Activated T-helper 1 cell treated with anti-CD3 and anti-CD28 coated beads, Interleukin-12 subunit alpha, Interleukin-12 subunit beta, Interleukin-2, Interleukin-4 antibody, amounts not matched to agents 30 ng/mL and 10 ng/mL and 1 ng/mL, durations not matched to agents 14 hours and 24 hours and 36 hours (primary cell): ENCODE measurements at regions of chr10 and their contacts with region 1.

Region 1: GRCh38 chr10:95907456-95908253 is at the start of gene CC2D2B:
- DNase-seq: peak; percentile 59
- H3K4me3 Mint-ChIP-seq: peak within 1 kb of the TSS; percentile 92
- H3K27ac Mint-ChIP-seq: peak within 1 kb of the TSS; percentile 91
- H3K4me1 Mint-ChIP-seq: peaks cover 16% of the 10 kb centered on the region
- H3K27me3 Mint-ChIP-seq: peaks cover 16% of the 10 kb centered on the region
- total RNA-seq, gene CC2D2B: 0.60 and 0.96 TPM in 2 replicates

Region 2: GRCh38 chr10:96129387-96130325 is 222.0 kb after region 1 on chr10 and contains the start of gene ZNF518A:
- intact Hi-C with region 1: loop called (anchors 1 kb)
- DNase-seq: peak; percentile 86
- H3K4me3 Mint-ChIP-seq: peak within 1 kb of the TSS; percentile 90
- H3K27ac Mint-ChIP-seq: peak within 1 kb of the TSS; percentile 99
- H3K4me1 Mint-ChIP-seq: peaks cover 33% of the 10 kb centered on the region
- H3K27me3 Mint-ChIP-seq: peaks cover 27% of the 10 kb centered on the region
- total RNA-seq, gene ZNF518A: 14.3 and 16.2 TPM in 2 replicates

Region 3: GRCh38 chr10:96292971-96293920 is 385.6 kb after region 1 on chr10:
- intact Hi-C with region 1: loop called (anchors 5 kb)
- DNase-seq: no peak
- H3K4me3 Mint-ChIP-seq: no peak overlapping the region
- H3K27ac Mint-ChIP-seq: no peak overlapping the region
- H3K4me1 Mint-ChIP-seq: peaks cover 14% of the 10 kb centered on the region
- H3K27me3 Mint-ChIP-seq: peaks cover 5% of the 10 kb centered on the region